ENCODE measurements at regions of chr2 and their contacts with region 1.

Region 1: DNA sequence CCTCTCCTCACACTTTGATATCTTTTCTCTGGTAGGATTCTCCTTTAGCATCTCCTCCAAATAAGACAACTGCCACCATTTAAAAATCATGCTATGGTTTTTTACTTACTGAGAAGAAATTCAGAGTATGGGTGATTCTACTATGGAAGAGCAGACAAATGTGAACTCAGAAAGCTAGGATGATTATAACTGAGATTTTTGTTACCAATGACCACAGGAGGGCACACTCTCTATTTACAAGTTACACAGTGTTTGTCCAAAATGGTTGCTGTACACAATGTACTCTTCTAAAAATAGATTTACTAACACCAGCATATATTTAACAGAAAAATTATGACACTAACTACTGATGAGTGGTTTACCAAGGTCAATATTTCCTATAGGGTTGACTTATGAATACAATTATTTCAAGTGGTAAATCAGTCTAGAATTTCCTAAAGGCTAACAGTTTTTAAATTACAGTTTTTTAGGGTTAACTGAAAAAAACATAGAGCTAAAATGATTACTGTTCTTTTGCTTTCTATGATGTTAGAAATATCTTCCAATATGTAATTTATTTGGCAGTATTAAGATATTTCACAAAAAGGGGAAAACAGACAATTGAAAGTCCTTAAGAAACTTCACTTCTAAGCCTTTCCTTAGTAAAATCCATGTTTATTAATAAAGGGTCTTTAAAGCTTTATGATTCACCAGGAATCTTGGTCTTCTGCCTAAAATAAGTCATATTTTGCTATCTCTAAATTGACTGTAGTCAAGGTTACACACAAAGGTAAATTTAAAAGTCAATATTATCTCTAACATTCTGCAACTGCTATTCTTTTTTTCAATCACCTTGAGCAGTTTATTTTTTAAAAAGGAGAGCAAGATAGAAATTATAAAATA is 57.2 kb downstream of the MAP4K3 start:
- DNase-seq: peak; percentile 23
- H3K4me3 ChIP-seq: no peak overlapping the region
- H3K27ac ChIP-seq: no peak overlapping the region
- H3K27me3 ChIP-seq: no peaks in the 10 kb centered on the region
- CTCF ChIP-seq: peak; percentile 60

Region 2: DNA sequence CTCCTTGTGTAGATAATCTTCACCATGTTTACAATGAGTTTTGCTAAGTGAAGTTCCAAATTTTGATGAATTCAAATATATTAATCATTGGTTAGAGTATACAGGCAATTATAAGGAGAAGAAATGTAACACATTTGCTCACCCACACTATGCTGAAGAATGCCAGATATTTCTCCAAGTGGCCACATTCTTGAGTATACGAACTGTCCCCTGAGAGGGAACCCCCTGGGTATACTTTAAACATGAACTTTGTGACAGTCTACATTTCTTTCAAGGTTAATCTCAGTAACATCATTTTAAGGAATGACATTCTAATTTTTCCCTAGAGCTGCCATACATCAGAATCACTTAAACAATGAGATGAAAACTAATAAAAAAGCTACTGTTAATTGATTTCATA is 96.3 kb before region 1 on chr2:
- CTCF ChIA-PET with region 1: no interaction called
- POLR2A ChIA-PET with region 1: no interaction called
- DNase-seq: no peak
- H3K4me3 ChIP-seq: no peak overlapping the region
- H3K27ac ChIP-seq: no peak overlapping the region
- H3K27me3 ChIP-seq: no peaks in the 10 kb centered on the region
- CTCF ChIP-seq: no peak

Region 3: GRCh38 chr2:39392672-39393071 is 12.8 kb after region 1 on chr2:
- CTCF ChIA-PET with region 1: interaction called, 11 read pairs
- POLR2A ChIA-PET with region 1: no interaction called
- DNase-seq: no peak
- H3K4me3 ChIP-seq: no peak overlapping the region
- H3K27ac ChIP-seq: no peak overlapping the region
- H3K27me3 ChIP-seq: no peaks in the 10 kb centered on the region
- CTCF ChIP-seq: no peak

Region 4: GRCh38 chr2:39513641-39514094 is 133.8 kb after region 1 on chr2:
- CTCF ChIA-PET with region 1: interaction called, 10 read pairs
- POLR2A ChIA-PET with region 1: no interaction called
- DNase-seq: peak; percentile 85
- H3K4me3 ChIP-seq: no peak overlapping the region
- H3K27ac ChIP-seq: peak overlapping the region; percentile 54
- H3K27me3 ChIP-seq: no peaks in the 10 kb centered on the region
- CTCF ChIP-seq: peak; percentile 78

Region 5: DNA sequence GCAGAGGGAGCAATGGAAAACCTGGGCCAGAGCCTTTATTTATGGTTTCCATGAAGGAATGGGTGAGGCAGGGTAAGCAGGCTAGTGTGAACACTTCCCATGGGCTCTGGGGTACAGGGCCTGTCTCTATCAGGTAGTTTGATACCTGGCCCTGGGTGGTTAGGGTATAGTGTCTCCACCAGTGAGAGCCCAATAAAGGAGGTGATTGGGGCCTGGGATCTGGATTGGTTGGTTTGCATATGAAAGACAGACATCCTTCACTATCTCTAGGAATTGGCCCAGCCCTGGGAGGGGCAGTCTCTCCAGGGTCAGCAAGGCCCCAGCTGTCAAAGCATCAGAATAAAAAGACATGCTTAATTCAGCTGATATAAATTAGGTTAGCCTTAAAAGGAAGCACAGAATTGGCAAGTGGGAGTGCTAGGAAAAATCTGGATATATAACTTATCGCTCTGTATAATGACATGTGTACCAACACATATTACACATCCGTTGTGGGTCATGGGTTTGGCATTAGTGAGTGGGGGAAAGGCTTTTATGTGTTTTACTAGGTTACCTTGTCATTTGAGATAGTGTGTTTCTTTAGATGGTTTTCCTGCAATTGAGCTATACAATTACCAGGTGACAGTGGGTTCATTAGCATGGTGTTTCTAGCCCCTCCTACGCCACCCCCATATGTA is 267.3 kb after region 1 on chr2:
- CTCF ChIA-PET with region 1: no interaction called
- POLR2A ChIA-PET with region 1: no interaction called
- DNase-seq: no peak
- H3K4me3 ChIP-seq: no peak overlapping the region
- H3K27ac ChIP-seq: no peak overlapping the region
- H3K27me3 ChIP-seq: no peaks in the 10 kb centered on the region
- CTCF ChIP-seq: no peak